Activated CD8-positive, alpha-beta T cell treated with anti-CD3 and anti-CD28 coated beads for 36 hours (primary cell): ENCODE measurements at regions of chr5 and their contacts with region 1.

Region 1: DNA sequence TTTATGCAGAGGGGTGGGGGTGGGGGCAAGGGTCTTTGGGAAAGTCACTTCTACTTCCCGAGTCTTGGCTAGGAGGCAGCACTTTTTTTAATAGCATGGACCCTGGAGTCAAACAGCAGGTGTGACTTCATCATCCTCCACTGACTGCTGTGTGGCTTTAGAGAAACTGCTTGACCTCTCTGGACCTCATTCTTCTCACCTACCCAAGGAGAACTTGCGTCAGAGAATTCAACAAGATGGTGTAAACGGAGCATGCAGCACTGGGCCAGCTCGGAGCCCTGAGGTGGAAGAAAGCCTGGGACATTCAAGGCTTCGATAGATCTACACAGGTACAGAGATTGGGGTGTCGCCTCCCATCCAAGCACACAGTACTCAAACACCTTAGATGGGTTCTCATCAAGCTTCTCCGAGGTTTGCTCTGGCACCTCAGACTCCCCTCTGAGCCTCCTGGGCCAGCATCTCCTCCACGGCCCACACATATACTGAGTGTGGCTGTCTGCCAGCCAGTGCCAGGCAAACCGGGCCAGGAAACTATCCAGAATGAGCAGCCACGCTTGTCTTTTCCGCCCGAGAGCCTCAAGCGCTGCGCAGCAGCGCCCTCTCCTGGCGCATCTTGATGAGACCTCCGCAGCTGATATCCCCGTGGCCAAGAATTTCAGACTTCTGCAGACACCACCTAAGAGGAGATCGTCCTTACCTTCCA is 4.6 kb upstream of the SLC25A48 start:
- DNase-seq: peak; percentile 70
- ATAC-seq: peak; percentile 60
- H3K4me3 Mint-ChIP-seq: no peak overlapping the region
- H3K27ac Mint-ChIP-seq: no peak overlapping the region
- H3K4me1 Mint-ChIP-seq: no peaks in the 10 kb centered on the region
- H3K27me3 Mint-ChIP-seq: peaks cover 32% of the 10 kb centered on the region
- CTCF ChIP-seq: peak; percentile 66

Region 2: DNA sequence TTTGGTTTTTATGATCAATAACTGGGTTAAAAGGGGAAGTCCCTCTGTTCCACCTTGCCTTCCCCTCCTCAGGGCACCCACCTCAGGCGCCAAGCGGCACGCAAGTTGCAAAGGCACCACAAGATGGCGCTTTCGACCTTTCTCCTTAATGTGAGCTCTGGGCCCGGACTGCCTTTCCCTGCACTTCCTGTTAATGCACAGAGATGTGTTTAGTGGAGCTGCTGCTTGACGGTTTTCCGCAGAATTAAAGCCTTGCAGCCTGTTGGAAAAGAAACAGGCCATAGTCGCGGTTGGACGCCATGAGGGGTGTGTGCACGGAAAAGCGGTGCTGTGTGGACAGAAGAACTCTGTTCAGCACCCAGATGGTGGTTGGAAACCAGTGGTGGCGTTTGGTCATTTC is 269.0 kb before region 1 on chr5:
- CTCF ChIA-PET with region 1: interaction called, 23 read pairs
- POLR2A ChIA-PET with region 1: no interaction called
- intact Hi-C with region 1: loop called (anchors 2 kb)
- DNase-seq: peak; percentile 89
- ATAC-seq: peak; percentile 96
- H3K4me3 Mint-ChIP-seq: no peak overlapping the region
- H3K27ac Mint-ChIP-seq: no peak overlapping the region
- H3K4me1 Mint-ChIP-seq: peaks cover 3% of the 10 kb centered on the region
- H3K27me3 Mint-ChIP-seq: peaks cover 27% of the 10 kb centered on the region
- CTCF ChIP-seq: peak; percentile 70